HCT116 (cell line): ENCODE measurements at regions of chr9 and their contacts with region 1.

Region 1: GRCh38 chr9:107465467-107466451 is 23.8 kb downstream of the KLF4 start:
- DNase-seq: no peak
- ATAC-seq: peak; percentile 97
- H3K4me3 ChIP-seq: peak overlapping the region; percentile 8 to 42
- H3K27ac ChIP-seq: no peak overlapping the region
- H3K4me1 ChIP-seq: peaks cover 0 to 13% of the 10 kb centered on the region in 2 experiments; a peak in 3 of 4 replicates
- H3K27me3 ChIP-seq: no peaks in the 10 kb centered on the region
- CTCF ChIP-seq: peak; percentile 57 to 78 (median 75)
- POLR2A ChIP-seq: no peak
- RAD21 ChIP-seq: peak; percentile 89

Region 2: DNA sequence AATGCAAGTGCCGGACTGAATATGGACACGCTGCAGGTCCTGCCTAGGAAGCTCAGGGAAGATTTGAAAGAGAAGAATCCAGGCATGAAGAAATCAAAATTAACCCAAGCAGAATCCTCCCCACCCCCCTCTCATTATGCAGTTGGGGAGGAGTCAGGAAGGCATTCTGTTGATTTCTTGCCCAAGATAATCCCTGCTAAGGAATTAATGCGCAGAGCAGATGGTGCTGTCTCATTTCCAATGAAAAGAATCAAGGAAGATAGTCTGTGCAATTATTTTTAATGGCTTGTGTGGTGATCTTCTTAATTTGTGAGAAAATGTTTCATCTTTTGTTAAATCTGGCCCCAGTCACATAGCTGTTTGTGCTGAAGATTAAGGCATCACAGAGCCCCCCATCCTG is 457.7 kb before region 1 on chr9:
- CTCF ChIA-PET with region 1: no interaction called
- POLR2A ChIA-PET with region 1: no interaction called
- RAD21 ChIA-PET with region 1: no interaction called
- intact Hi-C with region 1: no loop called
- DNase-seq: no peak
- ATAC-seq: no peak
- H3K4me3 ChIP-seq: no peak overlapping the region
- H3K27ac ChIP-seq: no peak overlapping the region
- H3K4me1 ChIP-seq: no peaks in the 10 kb centered on the region
- H3K27me3 ChIP-seq: no peaks in the 10 kb centered on the region
- CTCF ChIP-seq: no peak
- POLR2A ChIP-seq: no peak
- RAD21 ChIP-seq: no peak

Region 3: GRCh38 chr9:107367727-107368502 is 97.8 kb before region 1 on chr9:
- CTCF ChIA-PET with region 1: no interaction called
- POLR2A ChIA-PET with region 1: no interaction called
- RAD21 ChIA-PET with region 1: no interaction called
- intact Hi-C with region 1: no loop called
- DNase-seq: no peak
- ATAC-seq: no peak
- H3K4me3 ChIP-seq: no peak overlapping the region
- H3K27ac ChIP-seq: no peak overlapping the region
- H3K4me1 ChIP-seq: no peaks in the 10 kb centered on the region
- H3K27me3 ChIP-seq: no peaks in the 10 kb centered on the region
- CTCF ChIP-seq: no peak
- POLR2A ChIP-seq: no peak
- RAD21 ChIP-seq: no peak

Region 4: GRCh38 chr9:108671176-108671575 is 1205.4 kb after region 1 on chr9:
- CTCF ChIA-PET with region 1: no interaction called
- POLR2A ChIA-PET with region 1: no interaction called
- RAD21 ChIA-PET with region 1: no interaction called
- intact Hi-C with region 1: loop called (anchors 5 kb)
- DNase-seq: peak; percentile 33
- ATAC-seq: peak; percentile 80
- H3K4me3 ChIP-seq: no peak overlapping the region
- H3K27ac ChIP-seq: no peak overlapping the region
- H3K4me1 ChIP-seq: peaks cover 0 to 6% of the 10 kb centered on the region in 2 experiments; a peak in 1 of 4 replicates
- H3K27me3 ChIP-seq: no peaks in the 10 kb centered on the region
- CTCF ChIP-seq: peak; percentile 46 to 60 (median 48); a peak in 5 of 6 replicates
- POLR2A ChIP-seq: no peak
- RAD21 ChIP-seq: peak; percentile 90

Region 5: GRCh38 chr9:108761655-108762347 is 1296.0 kb after region 1 on chr9:
- CTCF ChIA-PET with region 1: interaction called, 13 read pairs
- POLR2A ChIA-PET with region 1: no interaction called
- RAD21 ChIA-PET with region 1: no interaction called
- intact Hi-C with region 1: loop called (anchors 5 kb)
- DNase-seq: peak; percentile 33
- ATAC-seq: peak; percentile 95
- H3K4me3 ChIP-seq: no peak overlapping the region
- H3K27ac ChIP-seq: no peak overlapping the region
- H3K4me1 ChIP-seq: no peaks in the 10 kb centered on the region
- H3K27me3 ChIP-seq: no peaks in the 10 kb centered on the region
- CTCF ChIP-seq: peak; percentile 70 to 93 (median 80); a peak in 5 of 6 replicates
- POLR2A ChIP-seq: no peak
- RAD21 ChIP-seq: peak; percentile 94